ENCODE measurements at regions of chr2 and their contacts with region 1.

Region 1: DNA sequence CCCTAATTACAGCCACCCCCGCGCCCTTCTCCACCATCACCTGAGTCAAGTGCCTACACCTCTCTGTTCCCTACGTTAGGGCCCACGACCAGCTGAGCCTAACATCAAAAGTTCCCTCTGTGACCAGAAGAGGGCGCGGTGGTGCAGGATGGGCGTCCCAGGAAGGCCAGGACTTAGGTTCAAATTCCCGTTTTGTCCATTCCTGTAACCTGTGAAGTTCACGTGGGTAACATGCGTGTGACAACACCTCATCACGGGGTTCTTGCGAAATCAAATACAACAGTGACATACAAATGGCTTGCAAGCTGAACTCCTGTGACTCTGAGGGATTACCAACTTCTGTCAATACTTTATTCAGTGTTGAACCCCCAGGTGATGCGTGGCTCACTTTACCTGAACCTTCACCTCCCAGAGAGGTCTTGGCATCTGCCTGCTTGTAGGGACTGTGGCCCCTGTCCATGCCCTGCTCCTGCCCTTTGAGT is 207.9 kb downstream of the ARL4C start:
- DNase-seq: peak; percentile 94
- H3K4me3 Mint-ChIP-seq: peak overlapping the region; percentile 72
- H3K27ac Mint-ChIP-seq: peak overlapping the region; percentile 99
- H3K4me1 Mint-ChIP-seq: peaks cover 71% of the 10 kb centered on the region
- H3K27me3 Mint-ChIP-seq: no peaks in the 10 kb centered on the region

Region 2: GRCh38 chr2:233990261-233990798 is 298.7 kb before region 1 on chr2:
- intact Hi-C with region 1: loop called (anchors 5 kb)
- DNase-seq: peak; percentile 91
- H3K4me3 Mint-ChIP-seq: peak overlapping the region; percentile 25
- H3K27ac Mint-ChIP-seq: peak overlapping the region; percentile 27
- H3K4me1 Mint-ChIP-seq: peaks cover 39% of the 10 kb centered on the region
- H3K27me3 Mint-ChIP-seq: peaks cover 18% of the 10 kb centered on the region

Region 3: DNA sequence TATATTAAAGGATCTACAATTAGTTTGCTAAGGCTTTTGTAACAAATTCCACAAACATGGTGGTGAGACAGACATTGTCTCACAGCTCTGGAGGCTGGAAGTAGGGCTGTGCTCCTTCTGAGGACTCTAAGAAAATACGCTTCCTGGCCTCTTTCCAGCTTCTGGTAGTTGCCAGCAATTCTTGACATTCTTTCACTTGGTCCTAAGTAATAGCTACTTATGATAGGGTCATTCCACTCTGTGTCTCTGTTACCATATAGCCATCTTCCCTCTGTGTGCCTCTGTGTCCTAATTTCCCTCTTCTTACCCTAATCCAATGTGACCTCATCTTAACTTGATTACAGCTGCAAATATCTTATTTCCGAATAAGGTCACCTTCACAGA is 119.8 kb before region 1 on chr2:
- intact Hi-C with region 1: no loop called
- DNase-seq: no peak
- H3K4me3 Mint-ChIP-seq: no peak overlapping the region
- H3K27ac Mint-ChIP-seq: no peak overlapping the region
- H3K4me1 Mint-ChIP-seq: peaks cover 8% of the 10 kb centered on the region
- H3K27me3 Mint-ChIP-seq: peaks cover 11% of the 10 kb centered on the region

Region 4: GRCh38 chr2:234269769-234270204 is 19.2 kb before region 1 on chr2:
- intact Hi-C with region 1: loop called (anchors 1 kb)
- DNase-seq: no peak
- H3K4me3 Mint-ChIP-seq: no peak overlapping the region
- H3K27ac Mint-ChIP-seq: peak overlapping the region; percentile 73
- H3K4me1 Mint-ChIP-seq: peaks cover 68% of the 10 kb centered on the region
- H3K27me3 Mint-ChIP-seq: no peaks in the 10 kb centered on the region

Region 5: GRCh38 chr2:234368861-234369261 is 79.8 kb after region 1 on chr2:
- intact Hi-C with region 1: loop called (anchors 2 kb)
- DNase-seq: peak; percentile 85
- H3K4me3 Mint-ChIP-seq: peak overlapping the region; percentile 10
- H3K27ac Mint-ChIP-seq: peak overlapping the region; percentile 69
- H3K4me1 Mint-ChIP-seq: peaks cover 69% of the 10 kb centered on the region
- H3K27me3 Mint-ChIP-seq: no peaks in the 10 kb centered on the region

Region 6: DNA sequence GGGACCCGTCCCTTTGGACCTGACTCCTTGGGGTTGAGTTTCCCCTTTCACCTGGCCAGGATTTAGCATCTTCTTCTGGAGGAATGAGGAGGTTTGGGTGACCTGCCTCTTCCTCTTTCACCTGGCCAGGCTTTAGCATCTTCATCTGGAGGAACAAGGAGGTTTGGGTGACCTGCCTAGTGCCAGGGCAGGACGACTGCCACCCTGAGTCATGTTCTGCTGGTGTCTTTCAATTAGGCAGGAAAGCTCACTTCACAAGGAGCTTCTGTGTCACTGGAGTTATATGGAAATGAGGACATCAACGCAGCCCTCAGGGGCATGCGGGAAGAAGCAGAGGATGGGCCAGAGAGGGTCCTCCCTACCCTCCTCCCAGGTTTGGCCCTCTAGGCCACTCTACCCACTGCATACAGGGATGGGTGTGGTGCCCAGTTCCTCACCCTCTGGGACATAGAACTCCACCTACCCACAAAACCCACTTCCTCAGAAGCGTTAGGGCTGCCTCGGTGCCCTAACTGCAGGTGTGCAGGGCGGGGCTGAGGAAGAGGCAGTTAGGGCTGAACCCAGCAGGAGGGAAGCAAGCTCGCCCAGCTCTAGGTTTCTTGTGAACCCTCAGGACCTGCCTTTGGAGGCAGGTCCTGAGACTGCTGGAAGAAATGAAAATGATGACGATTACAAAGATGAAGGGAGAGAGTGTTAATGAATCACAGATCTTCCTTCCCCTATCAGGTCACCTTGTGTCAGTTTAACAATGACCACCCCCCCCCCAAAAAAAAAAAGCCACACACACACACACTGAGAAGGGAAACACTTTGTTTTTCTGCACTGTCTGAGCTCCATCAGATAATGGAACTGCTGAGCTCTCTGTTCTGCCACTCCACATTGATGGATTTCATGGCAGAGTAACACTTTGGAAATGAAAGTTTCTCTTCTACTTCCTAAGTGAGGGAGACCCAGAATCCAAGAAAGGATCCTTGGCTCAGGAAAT is 136.9 kb after region 1 on chr2:
- intact Hi-C with region 1: loop called (anchors 1 kb)
- DNase-seq: peak; percentile 94
- H3K4me3 Mint-ChIP-seq: peak overlapping the region; percentile 84
- H3K27ac Mint-ChIP-seq: peak overlapping the region; percentile 99
- H3K4me1 Mint-ChIP-seq: peaks cover 81% of the 10 kb centered on the region
- H3K27me3 Mint-ChIP-seq: no peaks in the 10 kb centered on the region

Region 7: GRCh38 chr2:234451852-234452625 is 163.0 kb after region 1 on chr2:
- intact Hi-C with region 1: loop called (anchors 1 kb)
- DNase-seq: no peak
- H3K4me3 Mint-ChIP-seq: peak overlapping the region; percentile 86
- H3K27ac Mint-ChIP-seq: peak overlapping the region; percentile 91
- H3K4me1 Mint-ChIP-seq: peaks cover 78% of the 10 kb centered on the region
- H3K27me3 Mint-ChIP-seq: no peaks in the 10 kb centered on the region

Region 8: DNA sequence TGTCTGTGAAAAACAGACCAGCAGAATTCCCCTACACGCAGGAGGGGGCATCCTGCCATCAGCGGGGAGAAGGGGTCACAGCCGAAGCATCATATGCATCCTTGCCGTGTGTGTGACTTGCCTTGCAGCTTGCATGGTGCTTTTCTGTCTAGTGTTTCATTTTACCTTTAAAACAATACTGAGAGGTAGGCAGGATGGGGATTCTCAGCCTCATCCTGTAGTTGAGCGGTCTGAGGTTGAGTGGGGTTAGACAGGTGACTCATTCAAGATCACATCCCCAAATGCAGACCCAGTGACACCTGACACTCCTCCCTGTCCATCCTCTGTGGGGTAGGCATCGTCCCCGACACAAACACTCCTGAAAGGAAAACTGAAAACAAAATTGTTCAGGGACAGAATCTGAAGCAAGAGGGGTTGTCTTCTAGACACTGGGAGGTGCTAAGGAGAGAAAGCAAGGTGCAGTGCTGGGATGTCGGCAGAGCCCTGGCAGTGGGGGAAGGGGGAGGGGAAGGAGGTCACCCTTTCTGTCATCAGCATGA is 200.0 kb after region 1 on chr2:
- intact Hi-C with region 1: loop called (anchors 1 kb)
- DNase-seq: peak; percentile 94
- H3K4me3 Mint-ChIP-seq: peak overlapping the region; percentile 90
- H3K27ac Mint-ChIP-seq: peak overlapping the region; percentile 97
- H3K4me1 Mint-ChIP-seq: peaks cover 84% of the 10 kb centered on the region
- H3K27me3 Mint-ChIP-seq: no peaks in the 10 kb centered on the region

Region 9: DNA sequence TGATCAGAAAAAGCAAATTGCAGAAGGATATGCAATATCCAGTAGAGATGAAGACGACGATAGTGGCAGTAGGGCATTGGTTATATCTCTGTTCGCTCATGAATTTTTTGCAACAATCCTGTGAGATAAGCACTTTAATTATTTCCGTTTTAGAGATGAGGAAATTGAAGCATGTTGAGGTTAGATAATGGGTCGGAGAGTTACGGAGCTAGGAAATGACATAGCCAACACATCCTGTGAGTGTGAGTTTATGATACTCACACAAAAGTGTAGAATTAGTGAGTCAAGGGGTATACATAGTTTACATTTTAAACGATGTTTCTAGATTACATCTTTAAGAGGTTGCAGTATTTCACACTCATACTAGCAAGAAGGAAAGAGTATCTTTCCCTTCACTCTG is 331.0 kb after region 1 on chr2:
- intact Hi-C with region 1: no loop called
- DNase-seq: no peak
- H3K4me3 Mint-ChIP-seq: no peak overlapping the region
- H3K27ac Mint-ChIP-seq: no peak overlapping the region
- H3K4me1 Mint-ChIP-seq: peaks cover 5% of the 10 kb centered on the region
- H3K27me3 Mint-ChIP-seq: peaks cover 7% of the 10 kb centered on the region

Measured in activated CD4-positive, alpha-beta T cell treated with anti-CD3 and anti-CD28 coated beads, Interleukin-2, amount 10 ng/mL, durations not matched to agents 24 days and 14 days (primary cell).